Activated CD4-positive, alpha-beta T cell treated with anti-CD3 and anti-CD28 coated beads for 36 hours (primary cell): ENCODE measurements at regions of chr20 and their contacts with region 1.

Region 1: GRCh38 chr20:61841966-61842365 is 223.7 kb downstream of the TAF4 start:
- DNase-seq: no peak
- ATAC-seq: no peak
- H3K4me3 Mint-ChIP-seq: no peak overlapping the region
- H3K27ac Mint-ChIP-seq: no peak overlapping the region
- H3K4me1 Mint-ChIP-seq: no peaks in the 10 kb centered on the region
- H3K27me3 Mint-ChIP-seq: no peaks in the 10 kb centered on the region

Region 2: DNA sequence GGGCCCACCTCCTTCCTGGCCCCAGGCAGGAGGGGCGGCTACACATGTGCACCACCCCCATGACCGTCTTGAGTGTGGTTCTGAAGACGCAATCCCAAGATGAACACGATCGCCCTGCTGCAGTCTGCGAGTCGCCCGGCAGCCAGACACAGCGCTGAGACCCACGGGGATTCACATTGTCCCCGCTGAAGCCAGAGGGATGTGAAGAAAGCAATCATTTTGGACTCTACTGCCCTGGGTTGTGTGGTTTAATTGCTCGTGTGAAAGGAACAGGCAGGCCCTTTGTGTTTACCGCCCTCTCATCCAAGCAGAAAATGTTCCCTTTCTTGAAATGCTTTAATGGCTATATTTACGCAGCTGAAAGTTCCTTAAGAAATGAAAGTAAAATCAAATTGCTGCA is 55.7 kb before region 1 on chr20:
- CTCF ChIA-PET with region 1: no interaction called
- POLR2A ChIA-PET with region 1: no interaction called
- intact Hi-C with region 1: loop called in 1 of 2 experiments (anchors 10 kb)
- DNase-seq: no peak
- ATAC-seq: no peak
- H3K4me3 Mint-ChIP-seq: no peak overlapping the region
- H3K27ac Mint-ChIP-seq: no peak overlapping the region
- H3K4me1 Mint-ChIP-seq: no peaks in the 10 kb centered on the region
- H3K27me3 Mint-ChIP-seq: peaks cover 2% of the 10 kb centered on the region